ENCODE measurements at regions of chr4 and their contacts with region 1.

Region 1: GRCh38 chr4:42371306-42372252 is 25.7 kb upstream of the SHISA3 start:
- DNase-seq: peak in 2 of 10 donors; percentile 10 to 21

Region 2: DNA sequence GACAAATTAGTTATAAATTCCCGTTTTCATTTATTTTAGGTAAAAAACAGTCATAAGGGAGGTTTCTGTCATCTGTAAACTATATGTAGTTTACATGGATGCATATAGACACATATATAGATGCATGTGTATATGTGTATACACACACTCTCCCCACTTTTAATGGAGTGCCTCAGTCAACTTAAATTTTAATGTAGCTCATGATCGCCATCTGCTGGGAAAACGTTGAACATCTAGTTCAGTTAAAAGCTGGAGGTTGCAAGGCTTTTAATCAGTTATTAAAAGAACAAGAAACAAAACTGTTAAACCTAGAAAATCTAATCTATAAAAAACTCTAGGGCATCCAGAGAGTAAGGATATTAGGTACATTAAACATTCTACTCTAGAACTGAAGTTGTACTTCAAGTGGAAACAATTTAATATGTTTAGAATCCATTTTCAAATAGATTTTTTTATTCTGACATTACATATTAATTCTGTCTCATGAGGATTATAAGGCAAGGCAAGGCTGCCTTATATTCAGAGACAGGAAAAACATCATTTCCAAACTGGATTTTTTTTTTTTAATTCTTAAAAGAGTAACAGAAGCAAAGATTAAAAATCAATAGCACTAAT is 148.3 kb after region 1 on chr4:
- intact Hi-C with region 1: loop called (anchors 1 kb)
- DNase-seq: peak in 3 of 10 donors; percentile 32 to 40 (median 39)

Region 3: GRCh38 chr4:42865572-42866189 is 494.1 kb after region 1 on chr4:
- intact Hi-C with region 1: loop called (anchors 5 kb)
- DNase-seq: peak in 5 of 10 donors; percentile 7 to 41 (median 27)

Measured in posterior cingulate gyrus (tissue), 11 donors.